ENCODE measurements at regions of chr5 and their contacts with region 1.

Region 1: DNA sequence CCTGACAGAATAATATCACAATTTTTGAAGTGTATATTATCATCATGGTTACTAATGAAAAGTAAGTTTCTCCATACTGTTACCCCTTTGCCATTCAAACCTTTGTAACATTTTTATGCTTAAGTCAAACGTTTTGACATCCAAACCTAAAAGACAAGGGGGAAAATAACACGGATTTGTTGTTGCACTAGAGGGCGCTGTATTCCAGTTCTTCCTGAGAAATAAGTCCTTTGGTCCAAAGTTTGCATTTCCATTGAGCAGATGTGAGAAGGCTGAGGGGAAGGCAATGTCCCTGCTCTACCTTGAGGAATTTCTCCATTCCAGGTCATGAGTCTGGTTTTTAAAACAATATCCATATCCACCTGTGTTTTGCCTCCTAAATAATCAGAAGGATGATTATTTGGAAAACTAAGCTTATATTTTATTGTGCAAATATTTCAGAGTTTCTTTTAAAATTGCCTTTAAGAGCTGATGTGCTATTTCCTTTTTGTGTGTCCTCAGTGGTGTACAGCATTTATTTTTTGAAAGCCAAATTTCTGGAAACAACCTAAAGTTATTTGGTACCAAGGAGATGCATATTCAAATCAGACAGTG is 9.7 kb downstream of the LECT2 start:
- DNase-seq: no peak
- H3K4me3 ChIP-seq: no peak overlapping the region
- H3K27ac ChIP-seq: no peak overlapping the region
- H3K4me1 ChIP-seq: no peaks in the 10 kb centered on the region
- H3K27me3 ChIP-seq: no peaks in the 10 kb centered on the region
- CTCF ChIP-seq: peak in 10 of 11 experiments; percentile 25 to 81 (median 67)
- POLR2A ChIP-seq: no peak

Region 2: GRCh38 chr5:136080483-136081216 is 135.6 kb after region 1 on chr5:
- intact Hi-C with region 1: loop called (anchors 5 kb)
- DNase-seq: peak; percentile 94
- H3K4me3 ChIP-seq: peak overlapping the region; percentile 8 to 53 (median 18)
- H3K27ac ChIP-seq: peak overlapping the region in 7 of 8 donors; percentile 10 to 78 (median 63)
- H3K4me1 ChIP-seq: peaks cover 0 to 28% (median 15%) of the 10 kb centered on the region in 6 donors
- H3K27me3 ChIP-seq: peaks cover 0 to 65% (median 12%) of the 10 kb centered on the region in 7 donors
- CTCF ChIP-seq: no peak
- POLR2A ChIP-seq: no peak

Region 3: DNA sequence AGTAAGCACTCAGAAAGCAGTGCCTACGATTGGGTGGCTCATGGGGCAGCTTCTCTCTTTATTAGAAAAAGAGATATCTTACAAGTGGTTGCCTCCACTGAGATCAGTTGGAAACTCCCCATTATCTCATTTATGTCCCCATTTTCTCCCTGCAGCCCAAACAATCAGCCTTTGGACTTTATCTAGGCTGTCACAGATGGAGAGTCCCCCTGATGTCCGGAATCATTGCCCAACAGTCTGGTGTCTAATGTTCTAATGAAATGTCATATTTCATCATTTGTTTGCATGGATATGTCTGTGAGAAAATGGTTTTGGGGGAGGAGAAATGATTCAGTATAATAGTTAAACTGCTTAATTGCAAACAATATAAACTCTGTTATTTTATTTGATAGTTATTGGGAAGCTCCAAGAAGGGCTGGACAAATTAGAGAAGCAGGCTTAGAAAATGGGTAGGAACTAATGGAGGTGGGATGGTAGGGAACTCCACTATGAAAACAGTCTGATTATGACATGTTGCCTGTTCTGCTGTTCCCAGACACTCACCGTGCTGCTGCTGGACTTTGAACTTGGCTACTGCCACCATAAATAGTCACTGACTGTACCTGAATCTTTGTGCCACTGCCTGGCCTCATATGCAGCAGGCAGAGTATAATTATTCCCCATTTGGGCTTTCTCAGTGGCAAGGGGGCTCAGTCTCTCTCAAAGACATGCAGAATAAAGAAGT is 149.3 kb after region 1 on chr5:
- intact Hi-C with region 1: no loop called
- DNase-seq: no peak
- H3K4me3 ChIP-seq: no peak overlapping the region
- H3K27ac ChIP-seq: peak overlapping the region in 2 of 8 donors; percentile 12 to 21
- H3K4me1 ChIP-seq: peaks cover 0 to 19% (median under 1%) of the 10 kb centered on the region in 6 donors
- H3K27me3 ChIP-seq: peaks cover 0 to 6% (median 0%) of the 10 kb centered on the region in 7 donors
- CTCF ChIP-seq: no peak
- POLR2A ChIP-seq: no peak

Region 4: GRCh38 chr5:136174021-136174659 is 229.1 kb after region 1 on chr5:
- intact Hi-C with region 1: loop called (anchors 10 kb)
- DNase-seq: no peak
- H3K4me3 ChIP-seq: no peak overlapping the region
- H3K27ac ChIP-seq: no peak overlapping the region
- H3K4me1 ChIP-seq: no peaks in the 10 kb centered on the region
- H3K27me3 ChIP-seq: no peaks in the 10 kb centered on the region
- CTCF ChIP-seq: peak in 10 of 11 experiments; percentile 4 to 59 (median 42)
- POLR2A ChIP-seq: no peak

Region 5: GRCh38 chr5:136212252-136212721 is 267.2 kb after region 1 on chr5:
- intact Hi-C with region 1: loop called (anchors 10 kb)
- DNase-seq: peak; percentile 80
- H3K4me3 ChIP-seq: no peak overlapping the region
- H3K27ac ChIP-seq: no peak overlapping the region
- H3K4me1 ChIP-seq: peaks cover 0 to 4% (median 0%) of the 10 kb centered on the region in 6 donors
- H3K27me3 ChIP-seq: peaks cover 0 to 80% (median 9%) of the 10 kb centered on the region in 7 donors
- CTCF ChIP-seq: peak; percentile 25 to 84 (median 72)
- POLR2A ChIP-seq: no peak

Measured in spleen (tissue), 13 donors.